ENCODE measurements at regions of chr4 and their contacts with region 1.

Region 1: DNA sequence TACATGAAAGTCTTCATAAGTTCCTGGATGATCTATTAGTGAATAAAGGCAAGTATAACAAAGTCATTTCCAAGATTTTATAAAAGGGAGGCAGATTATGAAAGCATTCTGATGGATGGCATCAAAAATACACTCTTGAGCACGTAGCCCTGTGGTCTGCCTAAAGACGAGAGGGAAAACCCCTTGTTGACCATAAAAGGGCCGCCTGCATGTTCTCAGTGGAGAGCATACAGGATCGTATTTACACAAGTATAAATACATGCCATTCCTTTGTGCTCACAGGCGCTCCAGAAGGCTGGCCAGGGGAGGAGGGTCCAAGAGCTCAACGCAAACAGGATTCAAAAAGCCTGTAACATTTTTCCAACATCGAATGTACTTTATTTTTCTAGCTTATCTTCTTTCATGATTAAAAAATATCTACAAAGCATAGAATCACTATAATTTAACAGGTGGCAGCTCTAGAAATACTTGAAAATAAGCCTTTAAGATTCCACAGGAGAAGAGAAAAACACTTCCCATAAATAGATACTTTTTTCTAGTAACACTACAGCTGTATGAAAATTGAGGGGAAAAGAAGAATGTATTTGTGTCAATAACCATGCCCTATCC is 29.6 kb downstream of the PDGFC start:
- DNase-seq: peak; percentile 59 to 84
- ATAC-seq: peak; percentile 82
- H3K4me3 ChIP-seq: peak overlapping the region; percentile 31 to 64
- H3K27ac ChIP-seq: peak overlapping the region; percentile 26 to 33
- H3K4me1 ChIP-seq: peaks cover 6 to 18% of the 10 kb centered on the region in 2 donors
- H3K27me3 ChIP-seq: no peaks in the 10 kb centered on the region

Region 2: GRCh38 chr4:156790866-156791265 is 151.2 kb before region 1 on chr4:
- intact Hi-C with region 1: no loop called
- DNase-seq: no peak
- ATAC-seq: no peak
- H3K4me3 ChIP-seq: no peak overlapping the region
- H3K27ac ChIP-seq: no peak overlapping the region
- H3K4me1 ChIP-seq: peaks cover 0 to 4% of the 10 kb centered on the region in 2 donors
- H3K27me3 ChIP-seq: no peaks in the 10 kb centered on the region

Region 3: GRCh38 chr4:156829201-156829873 is 112.7 kb before region 1 on chr4:
- intact Hi-C with region 1: loop called in 1 of 2 experiments (anchors 10 kb)
- DNase-seq: peak in 1 of 2 donors; percentile 56
- ATAC-seq: peak; percentile 82
- H3K4me3 ChIP-seq: no peak overlapping the region
- H3K27ac ChIP-seq: no peak overlapping the region
- H3K4me1 ChIP-seq: no peaks in the 10 kb centered on the region
- H3K27me3 ChIP-seq: no peaks in the 10 kb centered on the region

Region 4: DNA sequence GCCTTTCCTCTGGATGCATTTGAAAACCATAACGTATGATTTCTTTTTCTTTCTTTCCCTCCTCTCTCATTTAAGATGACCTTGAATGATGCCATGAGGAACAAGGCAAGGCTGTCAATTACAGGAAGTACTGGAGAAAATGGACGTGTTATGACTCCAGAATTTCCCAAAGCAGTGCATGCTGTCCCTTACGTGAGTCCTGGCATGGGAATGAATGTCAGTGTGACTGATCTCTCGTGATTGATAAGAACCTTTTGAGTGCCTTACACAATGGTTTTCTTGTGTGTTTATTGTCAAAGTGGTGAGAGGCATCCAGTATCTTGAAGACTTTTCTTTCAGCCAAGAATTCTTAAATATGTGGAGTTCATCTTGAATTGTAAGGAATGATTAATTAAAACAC is 421.3 kb after region 1 on chr4:
- intact Hi-C with region 1: no loop called
- DNase-seq: no peak
- ATAC-seq: no peak
- H3K4me3 ChIP-seq: no peak overlapping the region
- H3K27ac ChIP-seq: no peak overlapping the region
- H3K4me1 ChIP-seq: no peaks in the 10 kb centered on the region
- H3K27me3 ChIP-seq: no peaks in the 10 kb centered on the region